GM12878 (cell line): ENCODE measurements at regions of chr5 and their contacts with region 1.

Region 1: GRCh38 chr5:179795863-179796833 is 2.4 kb downstream of the LTC4S start:
- DNase-seq: peak; percentile 31
- ATAC-seq: peak; percentile 87
- H3K4me3 ChIP-seq: peak overlapping the region; percentile 75
- H3K27ac ChIP-seq: peak overlapping the region; percentile 62; the same call in 1 of the 2 replicates
- H3K4me1 ChIP-seq: peaks cover 23% of the 10 kb centered on the region
- H3K27me3 ChIP-seq: no peaks in the 10 kb centered on the region
- CTCF ChIP-seq: peak; percentile 57 to 85 (median 60); a peak in 4 of 6 replicates
- EP300 ChIP-seq: peak in 1 of 2 experiments; percentile 44; a peak in 1 of 4 replicates
- POLR2A ChIP-seq: peak; percentile 66
- RAD21 ChIP-seq: peak; percentile 39

Region 2: GRCh38 chr5:179486596-179487051 is 309.5 kb before region 1 on chr5:
- CTCF ChIA-PET with region 1: no interaction called
- POLR2A ChIA-PET with region 1: no interaction called
- RAD21 ChIA-PET with region 1: no interaction called
- SMC1A ChIA-PET with region 1: no interaction called
- in situ Hi-C with region 1: no loop called
- intact Hi-C with region 1: no loop called
- DNase-seq: no peak
- ATAC-seq: no peak
- H3K4me3 ChIP-seq: no peak overlapping the region
- H3K27ac ChIP-seq: no peak overlapping the region
- H3K4me1 ChIP-seq: no peaks in the 10 kb centered on the region
- H3K27me3 ChIP-seq: no peaks in the 10 kb centered on the region
- CTCF ChIP-seq: no peak
- EP300 ChIP-seq: no peak
- POLR2A ChIP-seq: no peak
- RAD21 ChIP-seq: no peak

Region 3: GRCh38 chr5:180034564-180034963 is 238.4 kb after region 1 on chr5:
- CTCF ChIA-PET with region 1: no interaction called
- POLR2A ChIA-PET with region 1: no interaction called
- RAD21 ChIA-PET with region 1: no interaction called
- SMC1A ChIA-PET with region 1: no interaction called
- in situ Hi-C with region 1: no loop called
- intact Hi-C with region 1: no loop called
- DNase-seq: no peak
- ATAC-seq: no peak
- H3K4me3 ChIP-seq: no peak overlapping the region
- H3K27ac ChIP-seq: no peak overlapping the region
- H3K4me1 ChIP-seq: no peaks in the 10 kb centered on the region
- H3K27me3 ChIP-seq: no peaks in the 10 kb centered on the region
- CTCF ChIP-seq: no peak
- EP300 ChIP-seq: no peak
- POLR2A ChIP-seq: no peak
- RAD21 ChIP-seq: no peak

Region 4: GRCh38 chr5:180069589-180070247 is 273.6 kb after region 1 on chr5:
- CTCF ChIA-PET with region 1: no interaction called
- POLR2A ChIA-PET with region 1: no interaction called
- RAD21 ChIA-PET with region 1: no interaction called
- SMC1A ChIA-PET with region 1: no interaction called
- in situ Hi-C with region 1: no loop called
- intact Hi-C with region 1: no loop called
- DNase-seq: no peak
- ATAC-seq: peak; percentile 33
- H3K4me3 ChIP-seq: peak overlapping the region; percentile 43; the same call in 1 of the 2 replicates
- H3K27ac ChIP-seq: no peak overlapping the region
- H3K4me1 ChIP-seq: no peaks in the 10 kb centered on the region
- H3K27me3 ChIP-seq: peaks cover 4 to 7% of the 10 kb centered on the region in 2 experiments; a peak in 3 of 4 replicates
- CTCF ChIP-seq: no peak
- EP300 ChIP-seq: no peak
- POLR2A ChIP-seq: no peak
- RAD21 ChIP-seq: no peak

Region 5: GRCh38 chr5:180090098-180090768 is 294.1 kb after region 1 on chr5:
- CTCF ChIA-PET with region 1: no interaction called
- POLR2A ChIA-PET with region 1: no interaction called
- RAD21 ChIA-PET with region 1: no interaction called
- SMC1A ChIA-PET with region 1: no interaction called
- in situ Hi-C with region 1: loop called (anchors 25 kb)
- intact Hi-C with region 1: loop called (anchors 2 kb)
- DNase-seq: no peak
- ATAC-seq: peak; percentile 89
- H3K4me3 ChIP-seq: no peak overlapping the region
- H3K27ac ChIP-seq: no peak overlapping the region
- H3K4me1 ChIP-seq: no peaks in the 10 kb centered on the region
- H3K27me3 ChIP-seq: no peaks in the 10 kb centered on the region; a peak in 1 of 4 replicates
- CTCF ChIP-seq: peak; percentile 54 to 70 (median 57); a peak in 5 of 6 replicates
- EP300 ChIP-seq: no peak
- POLR2A ChIP-seq: no peak; the same call in 1 of the 2 replicates
- RAD21 ChIP-seq: peak; percentile 41